ENCODE measurements at regions of chr11 and their contacts with region 1.

Region 1: DNA sequence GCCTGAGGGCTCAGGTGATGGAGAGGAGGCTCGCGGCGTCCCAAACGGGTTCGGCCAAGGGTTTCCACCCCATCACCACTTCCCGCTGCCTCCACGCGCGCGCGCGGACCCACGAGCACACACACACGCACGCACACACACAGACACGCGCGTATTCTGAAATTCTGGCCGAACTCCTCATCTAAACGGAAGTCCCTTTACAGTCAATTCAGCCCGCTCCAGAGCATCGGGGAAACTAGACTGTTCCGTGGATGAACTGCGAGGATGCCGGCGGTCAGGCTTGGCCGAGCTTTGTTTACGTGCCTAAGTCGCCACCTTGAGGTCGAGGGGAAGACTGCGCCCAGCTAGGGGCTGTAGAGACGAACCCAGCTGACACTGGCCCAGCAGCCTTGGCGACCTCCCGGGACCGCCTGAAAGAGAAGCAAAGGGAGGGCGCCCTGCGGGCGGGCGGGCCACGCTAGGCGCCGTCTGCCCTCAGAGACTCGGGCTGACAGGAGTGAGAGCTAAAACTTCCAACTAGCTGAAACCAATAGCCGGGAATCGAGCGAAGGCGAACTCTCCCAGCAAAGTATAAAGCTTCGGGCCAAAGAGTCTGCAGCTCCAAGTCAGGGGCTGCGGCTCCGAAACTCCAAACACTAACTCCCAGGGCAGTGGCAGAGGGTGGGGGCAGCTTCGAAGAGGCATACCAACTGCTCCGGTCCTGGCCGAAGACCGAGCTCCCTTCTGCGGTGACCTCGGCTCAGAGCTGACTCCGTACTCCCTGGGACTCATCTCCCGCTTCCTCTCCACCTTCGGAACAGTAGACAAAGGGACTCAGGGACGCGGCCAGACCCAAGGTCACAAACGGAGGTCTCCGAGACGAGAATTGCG is 124.7 kb upstream of the C11orf58 start:
- DNase-seq: peak; percentile 27 to 70
- ATAC-seq: peak; percentile 75 to 87 (median 76)
- H3K4me3 ChIP-seq: no peak overlapping the region
- H3K4me3 Mint-ChIP-seq: peak overlapping the region; percentile 9
- H3K27ac ChIP-seq: no peak overlapping the region
- H3K27ac Mint-ChIP-seq: no peak overlapping the region
- H3K4me1 ChIP-seq: peaks cover 13% of the 10 kb centered on the region
- H3K4me1 Mint-ChIP-seq: peaks cover 0 to 15% of the 10 kb centered on the region in 2 donors
- H3K27me3 ChIP-seq: peaks cover 65% of the 10 kb centered on the region
- H3K27me3 Mint-ChIP-seq: peaks cover 35 to 53% of the 10 kb centered on the region in 2 donors
- CTCF ChIP-seq: peak; percentile 38

Region 2: GRCh38 chr11:15941201-15941770 is 672.5 kb before region 1 on chr11:
- intact Hi-C with region 1: loop called (anchors 5 kb)
- DNase-seq: peak in 1 of 2 donors; percentile 4
- ATAC-seq: no peak
- H3K4me3 ChIP-seq: no peak overlapping the region
- H3K4me3 Mint-ChIP-seq: no peak overlapping the region
- H3K27ac ChIP-seq: no peak overlapping the region
- H3K27ac Mint-ChIP-seq: no peak overlapping the region
- H3K4me1 ChIP-seq: peaks cover 4% of the 10 kb centered on the region
- H3K4me1 Mint-ChIP-seq: no peaks in the 10 kb centered on the region
- H3K27me3 ChIP-seq: no peaks in the 10 kb centered on the region
- H3K27me3 Mint-ChIP-seq: peaks cover 0 to 9% of the 10 kb centered on the region in 2 donors
- CTCF ChIP-seq: peak; percentile 30

Region 3: GRCh38 chr11:16804104-16804947 is 190.6 kb after region 1 on chr11:
- intact Hi-C with region 1: no loop called
- DNase-seq: no peak
- ATAC-seq: no peak
- H3K4me3 ChIP-seq: no peak overlapping the region
- H3K4me3 Mint-ChIP-seq: no peak overlapping the region
- H3K27ac ChIP-seq: no peak overlapping the region
- H3K27ac Mint-ChIP-seq: no peak overlapping the region
- H3K4me1 ChIP-seq: peaks cover 8% of the 10 kb centered on the region
- H3K4me1 Mint-ChIP-seq: peaks cover 0 to 5% of the 10 kb centered on the region in 2 donors
- H3K27me3 ChIP-seq: no peaks in the 10 kb centered on the region
- H3K27me3 Mint-ChIP-seq: no peaks in the 10 kb centered on the region
- CTCF ChIP-seq: no peak

Measured in natural killer cell (primary cell).